CD14-positive monocyte (primary cell): ENCODE measurements at regions of chr10 and their contacts with region 1.

Region 1: DNA sequence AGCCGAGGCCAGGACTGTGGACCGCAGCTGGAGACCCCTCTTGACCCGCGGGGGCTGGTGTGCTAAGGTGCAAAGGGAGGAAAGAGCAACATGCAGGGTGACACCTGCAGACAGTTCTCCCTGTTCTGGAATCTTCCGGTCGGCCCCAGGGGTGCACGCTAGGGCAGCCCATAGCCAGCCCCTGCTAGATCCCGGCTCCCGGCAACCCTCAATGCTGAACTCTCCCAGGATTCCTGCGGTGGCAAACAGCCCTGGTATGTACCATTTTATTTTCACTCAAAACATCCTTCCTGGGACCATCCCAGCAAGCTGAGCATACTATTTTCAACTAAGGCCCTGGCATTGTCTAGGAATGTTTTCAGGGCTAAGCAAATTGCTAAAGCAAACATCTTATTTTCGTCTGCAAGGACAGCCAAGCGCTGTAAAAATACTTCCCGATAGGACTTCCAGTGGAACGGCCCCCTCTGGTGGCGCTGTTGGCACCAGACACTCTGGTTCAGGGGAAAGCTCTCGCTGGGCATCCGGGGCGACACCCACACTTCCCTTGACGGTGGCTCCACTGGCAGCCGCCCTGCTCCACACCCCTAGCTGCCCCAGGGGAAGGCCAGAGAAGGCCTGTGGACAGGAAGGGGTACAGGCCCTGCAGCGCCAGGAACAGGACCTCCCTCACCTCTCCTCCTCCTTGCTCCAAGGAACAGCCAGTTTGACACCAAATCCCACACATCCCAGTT is 99.4 kb downstream of the CTBP2 start:
- DNase-seq: peak; percentile 64 to 78 (median 72)
- H3K4me3 ChIP-seq: peak overlapping the region in 1 of 3 experiments; percentile 58
- H3K4me3 Mint-ChIP-seq: peak overlapping the region in 1 of 2 donors; percentile 82
- H3K27ac ChIP-seq: peak overlapping the region; percentile 41 to 62
- H3K27ac Mint-ChIP-seq: peak overlapping the region; percentile 74 to 92 (median 90)
- H3K4me1 ChIP-seq: peaks cover 72 to 87% of the 10 kb centered on the region in 2 donors
- H3K4me1 Mint-ChIP-seq: peaks cover 81% of the 10 kb centered on the region
- H3K27me3 ChIP-seq: no peaks in the 10 kb centered on the region
- H3K27me3 Mint-ChIP-seq: peaks cover 0 to 6% (median 2%) of the 10 kb centered on the region in 3 donors
- CTCF ChIP-seq: peak; percentile 87

Region 2: GRCh38 chr10:125048101-125048864 is 12.7 kb before region 1 on chr10:
- intact Hi-C with region 1: loop called (anchors 2 kb)
- DNase-seq: peak; percentile 68 to 72 (median 69)
- H3K4me3 ChIP-seq: no peak overlapping the region
- H3K4me3 Mint-ChIP-seq: no peak overlapping the region
- H3K27ac ChIP-seq: peak overlapping the region; percentile 21 to 45
- H3K27ac Mint-ChIP-seq: peak overlapping the region in 3 of 7 donors; percentile 22 to 63 (median 58)
- H3K4me1 ChIP-seq: peaks cover 12% of the 10 kb centered on the region in 2 donors
- H3K4me1 Mint-ChIP-seq: peaks cover 30% of the 10 kb centered on the region
- H3K27me3 ChIP-seq: no peaks in the 10 kb centered on the region
- H3K27me3 Mint-ChIP-seq: no peaks in the 10 kb centered on the region
- CTCF ChIP-seq: peak; percentile 97

Region 3: DNA sequence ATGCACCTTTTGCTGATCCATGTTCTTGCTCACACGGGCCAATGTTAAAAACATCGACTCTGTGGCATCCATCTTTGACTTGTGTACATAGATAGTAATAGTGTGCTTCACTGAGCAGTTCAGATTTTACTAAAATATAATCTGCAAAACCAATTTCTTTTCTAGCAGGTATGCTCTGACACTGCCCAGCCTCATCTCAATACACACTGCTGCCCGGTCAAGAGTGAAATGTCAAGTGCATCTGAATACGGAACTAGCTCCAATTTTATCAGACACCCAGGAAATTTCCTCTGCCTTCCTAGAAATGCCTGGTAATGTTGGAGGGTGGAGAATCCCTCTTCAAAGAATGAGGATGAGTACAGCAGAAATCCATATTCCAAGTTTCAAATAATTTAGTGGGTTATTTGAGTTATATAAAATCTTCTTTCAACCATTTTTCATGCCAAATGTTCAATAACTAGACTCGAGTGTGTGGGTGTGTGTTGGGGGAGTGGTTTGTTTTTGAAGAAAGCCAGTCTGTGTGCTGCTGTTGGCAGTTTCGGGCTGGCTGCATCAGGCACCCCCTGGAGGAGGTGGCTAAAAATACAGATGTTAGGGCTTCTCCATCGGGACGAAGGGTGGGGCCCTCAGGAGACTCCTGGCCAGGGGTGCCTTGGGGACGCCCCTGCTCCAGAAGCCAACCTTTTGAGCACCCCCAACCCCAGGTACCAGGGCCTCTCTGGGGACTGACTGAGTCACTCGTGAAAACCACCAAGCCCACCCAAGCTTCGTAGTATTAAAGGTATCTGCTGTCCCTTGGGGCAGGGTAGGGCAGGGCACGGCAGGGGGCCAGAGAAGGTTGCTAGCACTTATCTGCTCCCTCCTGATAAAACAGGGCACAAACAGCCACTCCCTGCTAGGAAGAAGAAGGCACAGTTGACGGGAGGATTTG is 84.0 kb after region 1 on chr10:
- intact Hi-C with region 1: loop called in 1 of 2 experiments (anchors 5 kb)
- DNase-seq: peak in 1 of 3 donors; percentile 24
- H3K4me3 ChIP-seq: no peak overlapping the region
- H3K4me3 Mint-ChIP-seq: peak overlapping the region in 1 of 2 donors; percentile 45
- H3K27ac ChIP-seq: no peak overlapping the region
- H3K27ac Mint-ChIP-seq: peak overlapping the region in 5 of 7 donors; percentile 5 to 79 (median 31)
- H3K4me1 ChIP-seq: peaks cover 54 to 60% of the 10 kb centered on the region in 2 donors
- H3K4me1 Mint-ChIP-seq: peaks cover 75% of the 10 kb centered on the region
- H3K27me3 ChIP-seq: no peaks in the 10 kb centered on the region
- H3K27me3 Mint-ChIP-seq: peaks cover 0 to 1% (median 0%) of the 10 kb centered on the region in 3 donors
- CTCF ChIP-seq: peak; percentile 46